Common myeloid progenitor, CD34-positive (primary cell): ENCODE measurements at regions of chr5 and their contacts with region 1.

Region 1: DNA sequence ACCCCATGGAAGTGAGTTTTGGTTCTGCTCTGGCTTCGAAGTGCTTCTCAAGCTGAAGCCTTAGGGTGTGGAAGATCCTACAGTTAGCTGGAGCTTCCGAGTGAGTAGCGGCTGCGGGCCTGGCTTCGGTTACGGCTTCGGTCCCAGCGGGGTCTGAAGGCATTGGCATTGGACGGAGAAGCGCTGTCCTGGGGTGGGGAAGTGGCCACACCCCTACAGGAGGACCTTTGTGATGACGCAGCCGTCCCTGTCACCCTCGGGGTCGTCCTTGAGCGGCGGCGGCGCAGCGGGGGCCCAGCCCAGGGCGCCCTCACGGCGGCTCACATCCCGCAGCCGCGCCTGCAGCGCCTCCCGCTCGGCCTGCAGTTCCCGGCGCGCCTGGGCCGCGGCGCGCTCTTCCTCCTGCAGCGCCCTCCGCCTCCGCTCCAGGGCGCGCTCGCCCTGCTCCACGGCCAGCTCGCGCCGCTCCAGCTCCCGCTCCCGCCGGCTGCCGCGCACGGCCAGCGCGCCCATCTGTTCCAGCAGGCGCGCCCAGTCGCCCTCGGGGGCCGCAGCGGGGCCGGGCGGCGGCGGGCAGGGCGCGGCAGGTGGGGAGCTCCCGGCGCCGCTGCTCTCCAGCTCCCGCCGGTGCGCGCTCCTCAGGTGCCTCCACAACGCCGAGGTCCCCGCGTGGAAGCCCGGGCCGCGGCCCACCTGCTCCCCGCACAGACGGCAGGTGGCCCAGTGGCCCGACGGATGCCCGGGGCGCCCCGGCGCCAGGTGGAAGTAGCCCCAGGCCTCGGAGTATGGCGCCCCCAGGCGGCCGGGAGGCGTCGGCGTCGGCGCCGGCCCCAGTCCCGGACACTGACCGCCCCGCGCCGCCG is 9.9 kb downstream of the ZBED3 start:
- DNase-seq: peak; percentile 71 to 85 (median 80)
- H3K4me3 ChIP-seq: peak overlapping the region; percentile 51 to 80 (median 67)
- H3K27ac ChIP-seq: peak overlapping the region in 1 of 2 experiments; percentile 14
- H3K4me1 ChIP-seq: peaks cover 0 to 13% (median 7%) of the 10 kb centered on the region in 4 experiments
- H3K27me3 ChIP-seq: no peaks in the 10 kb centered on the region

Region 2: DNA sequence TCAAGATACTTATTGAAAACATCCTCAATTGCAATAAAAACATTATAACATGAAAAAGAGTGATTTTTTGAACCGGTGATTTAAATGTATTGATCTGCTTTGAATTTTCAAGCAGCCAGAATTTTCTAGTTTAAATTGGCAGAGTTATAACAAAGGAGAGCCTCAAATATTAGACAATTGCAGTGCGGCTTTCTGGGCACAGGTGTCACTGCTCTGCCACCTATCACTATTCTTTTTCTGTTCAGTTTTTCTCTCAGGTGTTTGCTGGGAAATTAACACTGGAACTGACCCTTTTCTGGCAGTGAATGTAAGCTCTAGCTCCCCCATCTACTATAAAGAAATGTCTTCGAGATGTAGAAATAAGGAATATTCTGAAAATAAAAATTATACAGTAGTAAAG is 13.2 kb before region 1 on chr5:
- CTCF ChIA-PET with region 1: interaction called, 12 read pairs
- POLR2A ChIA-PET with region 1: no interaction called
- DNase-seq: no peak
- H3K4me3 ChIP-seq: no peak overlapping the region
- H3K27ac ChIP-seq: no peak overlapping the region
- H3K4me1 ChIP-seq: peaks cover 0 to 22% (median 4%) of the 10 kb centered on the region in 4 experiments
- H3K27me3 ChIP-seq: no peaks in the 10 kb centered on the region